ENCODE measurements at regions of chr2 and their contacts with region 1.

Region 1: GRCh38 chr2:160472839-160473251 is 20.8 kb downstream of the RBMS1 start:
- DNase-seq: no peak
- H3K4me3 ChIP-seq: no peak overlapping the region
- H3K27ac ChIP-seq: no peak overlapping the region
- H3K4me1 ChIP-seq: no peaks in the 10 kb centered on the region
- H3K27me3 ChIP-seq: no peaks in the 10 kb centered on the region
- CTCF ChIP-seq: no peak

Region 2: DNA sequence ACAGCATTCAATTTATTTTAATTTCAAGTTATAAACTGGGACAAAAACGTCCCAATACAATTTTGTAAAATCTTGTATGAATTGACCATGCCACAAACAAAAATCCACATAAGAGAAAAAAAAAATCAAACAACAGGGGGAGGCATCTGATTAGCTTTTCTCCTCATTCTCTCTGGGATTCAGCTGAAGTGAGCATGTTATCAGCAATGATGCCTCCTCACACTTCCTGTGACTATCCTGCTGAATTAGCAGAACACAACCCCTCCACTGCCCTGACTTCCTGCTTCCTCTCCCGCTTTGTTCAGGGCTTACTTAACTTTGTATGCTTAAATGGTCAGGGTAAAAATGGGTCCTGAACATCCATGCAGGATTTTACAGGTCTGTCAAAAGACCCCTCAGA is 140.5 kb before region 1 on chr2:
- CTCF ChIA-PET with region 1: interaction called, 16 read pairs
- POLR2A ChIA-PET with region 1: no interaction called
- intact Hi-C with region 1: no loop called
- DNase-seq: no peak
- H3K4me3 ChIP-seq: no peak overlapping the region
- H3K27ac ChIP-seq: no peak overlapping the region
- H3K4me1 ChIP-seq: peaks cover 27% of the 10 kb centered on the region
- H3K27me3 ChIP-seq: no peaks in the 10 kb centered on the region
- CTCF ChIP-seq: no peak

Region 3: DNA sequence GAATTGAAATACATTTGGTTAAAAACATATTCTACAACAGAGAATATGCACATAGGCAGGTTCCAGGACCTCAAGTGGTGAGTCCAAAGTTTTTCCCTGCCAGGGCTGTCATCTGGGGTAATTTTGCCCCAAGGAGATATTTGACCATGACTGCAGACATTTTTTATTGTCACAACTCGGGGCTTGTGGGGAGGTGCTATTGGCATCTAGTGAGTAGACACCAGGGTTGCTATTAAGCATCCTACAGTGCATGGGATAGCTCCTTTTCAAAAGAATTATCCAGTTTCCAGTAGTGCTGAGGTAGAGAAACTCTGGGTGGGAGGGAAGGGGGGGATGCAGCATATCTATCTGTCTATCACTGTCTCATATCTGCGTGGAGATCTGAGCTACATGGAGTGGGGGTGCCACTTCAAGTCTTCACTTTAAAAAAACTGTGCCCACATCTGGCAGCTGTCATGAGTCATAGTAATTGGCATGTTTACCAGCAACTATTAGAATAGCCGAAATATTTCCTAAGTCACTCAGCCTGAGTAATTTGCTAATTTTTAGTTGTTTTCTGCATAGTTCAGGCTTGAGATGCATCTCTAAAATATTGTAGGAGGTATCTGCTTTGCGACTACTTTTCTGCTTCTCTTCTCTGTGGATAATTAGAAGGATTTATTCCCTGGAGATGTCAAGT is 274.8 kb after region 1 on chr2:
- CTCF ChIA-PET with region 1: no interaction called
- POLR2A ChIA-PET with region 1: no interaction called
- intact Hi-C with region 1: no loop called
- DNase-seq: peak; percentile 26 to 75
- H3K4me3 ChIP-seq: 0 out of 2 replicates have a peak overlapping the region, but pooled peaks have one; percentile 9
- H3K27ac ChIP-seq: peak overlapping the region; percentile 59
- H3K4me1 ChIP-seq: peaks cover 50% of the 10 kb centered on the region
- H3K27me3 ChIP-seq: no peaks in the 10 kb centered on the region
- CTCF ChIP-seq: no peak

Measured in PC-9 (cell line).